Activated CD8-positive, alpha-beta T cell treated with anti-CD3 and anti-CD28 coated beads, Interleukin-2, amount 10 ng/mL, durations not matched to agents 7 days and 5 days (primary cell): ENCODE measurements at regions of chr20 and their contacts with region 1.

Region 1: GRCh38 chr20:35954200-35954906 is at the start of gene SCAND1:
- DNase-seq: peak; percentile 98
- ATAC-seq: peak; percentile 89
- H3K4me3 Mint-ChIP-seq: peak within 1 kb of the TSS; percentile 99
- H3K27ac Mint-ChIP-seq: peak within 1 kb of the TSS; percentile 100
- H3K4me1 Mint-ChIP-seq: peaks cover 24% of the 10 kb centered on the region
- H3K27me3 Mint-ChIP-seq: no peaks in the 10 kb centered on the region
- total RNA-seq, gene SCAND1: 63.2 to 64.7 TPM

Region 2: GRCh38 chr20:35490736-35491181 is 463.6 kb before region 1 on chr20:
- CTCF ChIA-PET with region 1: interaction called, 8 read pairs
- POLR2A ChIA-PET with region 1: interaction called, 13 read pairs
- DNase-seq: peak; percentile 87
- ATAC-seq: peak; percentile 96
- H3K4me3 Mint-ChIP-seq: peak overlapping the region; percentile 99
- H3K27ac Mint-ChIP-seq: peak overlapping the region; percentile 99
- H3K4me1 Mint-ChIP-seq: peaks cover 53% of the 10 kb centered on the region
- H3K27me3 Mint-ChIP-seq: no peaks in the 10 kb centered on the region

Region 3: GRCh38 chr20:35664544-35665221 is 289.7 kb before region 1 on chr20 and contains the starts of genes CPNE1 and RBM12:
- CTCF ChIA-PET with region 1: interaction called, 18 read pairs
- POLR2A ChIA-PET with region 1: interaction called, 34 read pairs
- DNase-seq: peak; percentile 96
- ATAC-seq: peak; percentile 80
- H3K4me3 Mint-ChIP-seq: peak within 1 kb of the TSS; percentile 96
- H3K27ac Mint-ChIP-seq: peak within 1 kb of the TSS; percentile 99
- H3K4me1 Mint-ChIP-seq: peaks cover 38% of the 10 kb centered on the region
- H3K27me3 Mint-ChIP-seq: no peaks in the 10 kb centered on the region
- total RNA-seq, gene CPNE1: 271 to 272 TPM
- total RNA-seq, gene RBM12: 112 to 119 TPM

Region 4: DNA sequence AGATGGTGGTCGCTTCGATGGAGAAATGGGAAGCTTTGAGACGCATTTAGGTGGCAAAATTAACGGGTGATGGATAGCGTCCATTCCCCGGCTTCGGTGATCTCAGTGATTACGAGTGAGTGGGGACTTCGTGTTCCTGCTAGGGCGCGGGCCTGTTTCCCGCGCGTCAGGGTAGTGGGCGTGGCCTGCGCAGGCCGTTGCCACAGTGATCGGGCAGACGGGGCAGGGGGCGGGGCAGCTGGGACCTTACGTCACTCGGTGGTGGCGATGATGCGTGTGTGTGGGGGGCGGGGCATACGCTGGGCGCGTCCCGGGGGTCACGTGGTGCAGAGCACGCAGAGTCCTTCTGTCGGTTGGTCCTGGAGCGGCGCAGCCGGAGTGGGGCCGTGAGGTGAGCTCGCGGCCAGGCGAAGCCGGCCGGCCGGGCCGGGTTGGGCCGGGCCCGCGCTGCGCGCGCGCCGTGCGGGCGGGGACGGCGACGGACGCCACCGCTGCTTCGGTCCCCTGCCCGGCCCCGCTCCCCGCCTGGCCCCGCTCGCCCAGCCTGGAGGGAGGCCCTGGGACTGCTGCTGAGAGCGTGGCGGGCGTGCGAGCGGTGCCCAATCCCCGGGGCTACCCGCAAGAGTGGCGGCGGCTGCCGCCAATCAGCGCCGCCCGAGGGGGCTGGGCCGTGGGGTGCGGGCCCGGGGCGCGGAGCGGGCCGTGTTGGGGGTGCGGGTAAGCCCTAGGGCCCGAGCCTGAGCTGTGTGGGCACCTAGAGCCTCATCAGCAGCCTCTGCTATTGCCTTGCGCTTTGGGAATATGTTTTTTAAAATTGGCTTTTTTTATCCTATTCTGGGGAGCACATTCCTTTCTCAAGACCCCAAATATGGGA is 182.4 kb before region 1 on chr20 and contains the start of gene PHF20:
- CTCF ChIA-PET with region 1: interaction called, 7 read pairs
- POLR2A ChIA-PET with region 1: interaction called, 22 read pairs
- DNase-seq: peak; percentile 100
- ATAC-seq: peak; percentile 93
- H3K4me3 Mint-ChIP-seq: peak within 1 kb of the TSS; percentile 82
- H3K27ac Mint-ChIP-seq: peak within 1 kb of the TSS; percentile 94
- H3K4me1 Mint-ChIP-seq: peaks cover 68% of the 10 kb centered on the region
- H3K27me3 Mint-ChIP-seq: no peaks in the 10 kb centered on the region
- total RNA-seq, gene PHF20: 53.6 to 61.5 TPM

Region 5: GRCh38 chr20:35942243-35942642 is 12.1 kb before region 1 on chr20:
- CTCF ChIA-PET with region 1: interaction called, 28 read pairs
- POLR2A ChIA-PET with region 1: interaction called, 14 read pairs
- DNase-seq: no peak
- ATAC-seq: no peak
- H3K4me3 Mint-ChIP-seq: no peak overlapping the region
- H3K27ac Mint-ChIP-seq: peak overlapping the region; percentile 57
- H3K4me1 Mint-ChIP-seq: no peaks in the 10 kb centered on the region
- H3K27me3 Mint-ChIP-seq: no peaks in the 10 kb centered on the region

Region 6: GRCh38 chr20:35994994-35995453 is 40.7 kb after region 1 on chr20:
- CTCF ChIA-PET with region 1: interaction called, 24 read pairs
- POLR2A ChIA-PET with region 1: interaction called, 4 read pairs
- DNase-seq: peak; percentile 85
- ATAC-seq: peak; percentile 88
- H3K4me3 Mint-ChIP-seq: no peak overlapping the region
- H3K27ac Mint-ChIP-seq: no peak overlapping the region
- H3K4me1 Mint-ChIP-seq: peaks cover 2% of the 10 kb centered on the region
- H3K27me3 Mint-ChIP-seq: peaks cover 8% of the 10 kb centered on the region